ENCODE measurements at regions of chr2 and their contacts with region 1.

Region 1: DNA sequence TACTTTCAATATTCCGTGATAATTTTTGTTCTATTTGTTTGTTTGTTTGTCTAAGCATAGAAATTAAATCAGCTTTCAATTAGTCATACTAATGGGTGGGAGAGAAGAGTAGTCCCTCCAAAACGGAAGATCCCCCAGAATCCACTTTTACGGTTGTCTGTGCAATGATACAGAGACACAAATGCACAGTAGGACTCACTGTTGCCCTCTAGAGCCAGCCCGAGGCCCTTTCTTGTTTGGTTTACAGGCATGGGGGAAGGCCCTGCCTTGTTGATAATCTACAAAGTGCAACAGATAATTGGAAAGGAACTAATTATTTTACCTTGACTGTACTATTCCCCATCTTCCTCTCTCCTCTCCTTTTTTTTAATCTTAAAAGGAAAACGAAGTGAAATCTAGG is 121.1 kb downstream of the ACOXL start:
- DNase-seq: peak; percentile 83
- ATAC-seq: peak; percentile 31
- H3K4me3 Mint-ChIP-seq: no peak overlapping the region
- H3K27ac Mint-ChIP-seq: peak overlapping the region; percentile 72
- H3K4me1 Mint-ChIP-seq: peaks cover 81% of the 10 kb centered on the region
- H3K27me3 Mint-ChIP-seq: peaks cover 6% of the 10 kb centered on the region
- CTCF ChIP-seq: peak; percentile 76

Region 2: GRCh38 chr2:110796787-110797186 is 56.7 kb before region 1 on chr2:
- CTCF ChIA-PET with region 1: no interaction called
- POLR2A ChIA-PET with region 1: no interaction called
- intact Hi-C with region 1: no loop called
- DNase-seq: no peak
- ATAC-seq: no peak
- H3K4me3 Mint-ChIP-seq: no peak overlapping the region
- H3K27ac Mint-ChIP-seq: no peak overlapping the region
- H3K4me1 Mint-ChIP-seq: no peaks in the 10 kb centered on the region
- H3K27me3 Mint-ChIP-seq: peaks cover 41% of the 10 kb centered on the region
- CTCF ChIP-seq: no peak

Region 3: DNA sequence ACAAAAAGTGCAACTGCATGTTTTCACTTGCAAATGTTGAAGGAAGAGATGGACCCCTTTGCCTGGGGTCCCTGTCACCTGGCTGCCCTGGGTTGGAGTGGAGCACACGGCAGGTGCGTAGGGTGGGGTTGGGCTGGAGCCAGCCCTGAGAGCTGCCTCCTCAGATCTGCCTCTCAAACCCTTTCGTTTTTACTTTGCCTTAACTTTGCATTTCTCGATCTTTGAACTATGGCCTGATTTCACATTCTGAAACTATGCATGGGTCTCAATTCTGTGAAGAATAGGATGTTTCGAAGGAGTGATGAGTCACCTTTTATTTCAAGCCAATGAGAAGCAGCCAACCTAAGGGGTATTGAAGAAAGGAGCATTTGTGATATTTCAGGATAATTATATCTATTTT is 11.7 kb after region 1 on chr2:
- CTCF ChIA-PET with region 1: interaction called, 50 read pairs
- POLR2A ChIA-PET with region 1: interaction called, 9 read pairs
- intact Hi-C with region 1: no loop called
- DNase-seq: peak; percentile 66
- ATAC-seq: peak; percentile 74
- H3K4me3 Mint-ChIP-seq: no peak overlapping the region
- H3K27ac Mint-ChIP-seq: no peak overlapping the region
- H3K4me1 Mint-ChIP-seq: peaks cover 60% of the 10 kb centered on the region
- H3K27me3 Mint-ChIP-seq: peaks cover 16% of the 10 kb centered on the region
- CTCF ChIP-seq: no peak